Activated T-helper 2 cell treated with anti-CD3 and anti-CD28 coated beads, Interferon-gamma antibody, Interleukin-2, Interleukin-4, amounts not matched to agents 10 μg/mL and 5 μg/mL and 100 μg/mL, durations not matched to agents 14 hours and 24 hours and 36 hours (primary cell): ENCODE measurements at regions of chr11 and their contacts with region 1.

Region 1: GRCh38 chr11:66001942-66002647 is at the starts of genes BANF1 and EIF1AD:
- DNase-seq: peak; percentile 96
- H3K4me3 Mint-ChIP-seq: peak within 1 kb of the TSS; percentile 98
- H3K27ac Mint-ChIP-seq: peak within 1 kb of the TSS; percentile 99
- H3K4me1 Mint-ChIP-seq: peaks cover 20% of the 10 kb centered on the region
- H3K27me3 Mint-ChIP-seq: no peaks in the 10 kb centered on the region
- total RNA-seq, gene BANF1: 272 and 281 TPM in 2 replicates
- total RNA-seq, gene EIF1AD: 64.5 and 65.2 TPM in 2 replicates

Region 2: GRCh38 chr11:65711785-65712632 is 290.1 kb before region 1 on chr11 and contains the start of gene KAT5:
- intact Hi-C with region 1: loop called (anchors 5 kb)
- DNase-seq: peak; percentile 99
- H3K4me3 Mint-ChIP-seq: peak within 1 kb of the TSS; percentile 89
- H3K27ac Mint-ChIP-seq: peak within 1 kb of the TSS; percentile 91
- H3K4me1 Mint-ChIP-seq: peaks cover 25% of the 10 kb centered on the region
- H3K27me3 Mint-ChIP-seq: no peaks in the 10 kb centered on the region
- total RNA-seq, gene KAT5: 76.3 and 79.4 TPM in 2 replicates

Region 3: DNA sequence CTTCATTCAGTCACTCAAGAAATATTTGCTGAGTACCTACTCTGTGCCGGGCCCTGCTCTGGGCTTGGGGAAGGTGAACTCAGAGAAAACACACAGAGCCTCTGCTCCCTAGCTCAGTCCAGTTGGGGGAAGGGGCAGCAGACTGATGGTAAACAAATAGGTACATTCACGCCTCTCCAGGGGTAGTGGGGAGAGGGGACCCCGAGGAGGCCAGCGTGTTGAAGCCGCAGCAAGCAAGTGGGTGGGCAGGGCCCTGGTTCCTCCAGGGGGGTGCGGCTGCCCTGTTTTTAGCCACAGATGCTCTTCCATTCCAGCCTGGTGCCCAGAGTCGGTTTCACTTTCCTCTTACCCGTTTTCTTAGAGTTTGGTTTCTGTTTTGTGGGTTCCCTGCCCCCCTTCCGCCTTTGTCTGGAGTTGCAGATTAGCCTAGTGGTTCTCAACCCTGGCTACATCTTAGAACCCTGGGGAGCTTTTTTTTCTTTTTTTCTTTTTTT is 74.1 kb before region 1 on chr11:
- intact Hi-C with region 1: no loop called
- DNase-seq: peak; percentile 75
- H3K4me3 Mint-ChIP-seq: peak overlapping the region; percentile 65
- H3K27ac Mint-ChIP-seq: peak overlapping the region; percentile 89
- H3K4me1 Mint-ChIP-seq: peaks cover 31% of the 10 kb centered on the region
- H3K27me3 Mint-ChIP-seq: no peaks in the 10 kb centered on the region

Region 4: GRCh38 chr11:66051766-66052663 is 49.9 kb after region 1 on chr11 and contains the start of gene SF3B2:
- intact Hi-C with region 1: loop called (anchors 1 kb)
- DNase-seq: peak; percentile 97
- H3K4me3 Mint-ChIP-seq: peak within 1 kb of the TSS; percentile 100
- H3K27ac Mint-ChIP-seq: peak within 1 kb of the TSS; percentile 97
- H3K4me1 Mint-ChIP-seq: peaks cover 28% of the 10 kb centered on the region
- H3K27me3 Mint-ChIP-seq: peaks cover 5% of the 10 kb centered on the region
- total RNA-seq, gene SF3B2: 252 and 268 TPM in 2 replicates